B cell (primary cell): ENCODE measurements at regions of chr19 and their contacts with region 1.

Region 1: DNA sequence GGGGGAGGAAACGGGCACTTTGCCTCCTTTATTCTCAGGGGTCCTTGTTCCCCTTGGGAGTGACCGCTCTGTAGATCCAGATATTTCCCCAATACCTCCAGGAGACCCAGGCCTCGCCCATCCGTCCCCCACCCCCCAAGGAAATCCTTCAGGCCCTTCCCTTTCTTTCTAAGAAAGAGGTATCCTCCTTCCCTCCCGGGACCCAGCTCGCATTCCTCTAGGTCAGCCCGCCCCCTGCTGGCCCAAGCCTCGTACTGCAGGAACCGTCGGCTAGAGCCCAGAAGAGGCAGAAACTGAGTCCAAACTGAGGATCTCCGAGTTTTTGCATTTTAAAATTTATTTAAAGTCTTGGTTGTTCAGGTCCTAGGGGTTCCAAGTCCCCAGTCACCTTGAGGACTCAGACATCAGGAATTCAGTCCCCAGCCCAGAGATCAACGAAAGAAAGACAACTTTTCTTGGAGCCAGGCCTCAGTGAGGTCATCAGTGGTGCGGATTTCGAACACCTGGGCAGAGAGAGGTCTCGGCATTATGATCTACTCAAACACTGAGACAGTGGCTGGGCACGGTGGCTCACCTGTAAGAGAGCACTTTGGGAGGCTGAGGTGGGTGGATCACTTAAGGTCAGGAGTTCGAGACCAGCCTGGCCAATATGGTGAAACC is 7.5 kb upstream of the LRFN1 start:
- DNase-seq: peak; percentile 78
- ATAC-seq: peak; percentile 92
- H3K4me3 ChIP-seq: no peak overlapping the region
- H3K4me3 Mint-ChIP-seq: no peak overlapping the region
- H3K27ac ChIP-seq: no peak overlapping the region
- H3K27ac Mint-ChIP-seq: no peak overlapping the region
- H3K4me1 ChIP-seq: peaks cover 5 to 11% of the 10 kb centered on the region in 2 donors
- H3K4me1 Mint-ChIP-seq: peaks cover 30% of the 10 kb centered on the region
- H3K27me3 ChIP-seq: no peaks in the 10 kb centered on the region
- H3K27me3 Mint-ChIP-seq: no peaks in the 10 kb centered on the region
- CTCF ChIP-seq: peak; percentile 94

Region 2: GRCh38 chr19:39110263-39110967 is 217.8 kb before region 1 on chr19:
- CTCF ChIA-PET with region 1: interaction called, 39 read pairs
- POLR2A ChIA-PET with region 1: no interaction called
- intact Hi-C with region 1: loop called (anchors 1 kb)
- DNase-seq: peak; percentile 77
- ATAC-seq: peak; percentile 85
- H3K4me3 ChIP-seq: no peak overlapping the region
- H3K4me3 Mint-ChIP-seq: no peak overlapping the region
- H3K27ac ChIP-seq: no peak overlapping the region
- H3K27ac Mint-ChIP-seq: no peak overlapping the region
- H3K4me1 ChIP-seq: no peaks in the 10 kb centered on the region
- H3K4me1 Mint-ChIP-seq: no peaks in the 10 kb centered on the region
- H3K27me3 ChIP-seq: peaks cover 0 to 8% (median 3%) of the 10 kb centered on the region in 4 experiments
- H3K27me3 Mint-ChIP-seq: peaks cover 28% of the 10 kb centered on the region
- CTCF ChIP-seq: peak; percentile 89

Region 3: DNA sequence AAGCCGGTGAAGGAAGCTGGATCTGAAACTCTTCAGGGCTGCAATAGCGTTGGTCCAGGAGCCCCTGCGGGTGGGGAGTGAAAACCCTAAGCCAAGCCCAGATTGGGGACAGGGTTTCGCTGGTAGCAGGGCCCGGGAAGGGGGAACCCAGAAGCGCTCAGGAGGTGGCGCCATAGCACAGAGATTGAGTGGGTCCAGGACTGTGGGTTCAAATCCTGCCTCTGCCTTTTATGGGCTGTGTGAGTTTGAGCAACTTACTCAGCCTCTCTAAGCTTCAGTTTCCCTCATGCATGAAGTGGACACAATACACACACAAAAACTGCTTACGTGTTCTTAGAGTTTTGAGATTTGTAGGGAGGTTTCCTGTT is 115.8 kb before region 1 on chr19:
- CTCF ChIA-PET with region 1: interaction called, 3 read pairs
- POLR2A ChIA-PET with region 1: no interaction called
- intact Hi-C with region 1: loop called (anchors 5 kb)
- DNase-seq: peak; percentile 47
- ATAC-seq: no peak
- H3K4me3 ChIP-seq: no peak overlapping the region
- H3K4me3 Mint-ChIP-seq: no peak overlapping the region
- H3K27ac ChIP-seq: no peak overlapping the region
- H3K27ac Mint-ChIP-seq: no peak overlapping the region
- H3K4me1 ChIP-seq: no peaks in the 10 kb centered on the region
- H3K4me1 Mint-ChIP-seq: no peaks in the 10 kb centered on the region
- H3K27me3 ChIP-seq: peaks cover 0 to 5% (median 1%) of the 10 kb centered on the region in 4 experiments
- H3K27me3 Mint-ChIP-seq: peaks cover 15% of the 10 kb centered on the region
- CTCF ChIP-seq: peak; percentile 20

Region 4: DNA sequence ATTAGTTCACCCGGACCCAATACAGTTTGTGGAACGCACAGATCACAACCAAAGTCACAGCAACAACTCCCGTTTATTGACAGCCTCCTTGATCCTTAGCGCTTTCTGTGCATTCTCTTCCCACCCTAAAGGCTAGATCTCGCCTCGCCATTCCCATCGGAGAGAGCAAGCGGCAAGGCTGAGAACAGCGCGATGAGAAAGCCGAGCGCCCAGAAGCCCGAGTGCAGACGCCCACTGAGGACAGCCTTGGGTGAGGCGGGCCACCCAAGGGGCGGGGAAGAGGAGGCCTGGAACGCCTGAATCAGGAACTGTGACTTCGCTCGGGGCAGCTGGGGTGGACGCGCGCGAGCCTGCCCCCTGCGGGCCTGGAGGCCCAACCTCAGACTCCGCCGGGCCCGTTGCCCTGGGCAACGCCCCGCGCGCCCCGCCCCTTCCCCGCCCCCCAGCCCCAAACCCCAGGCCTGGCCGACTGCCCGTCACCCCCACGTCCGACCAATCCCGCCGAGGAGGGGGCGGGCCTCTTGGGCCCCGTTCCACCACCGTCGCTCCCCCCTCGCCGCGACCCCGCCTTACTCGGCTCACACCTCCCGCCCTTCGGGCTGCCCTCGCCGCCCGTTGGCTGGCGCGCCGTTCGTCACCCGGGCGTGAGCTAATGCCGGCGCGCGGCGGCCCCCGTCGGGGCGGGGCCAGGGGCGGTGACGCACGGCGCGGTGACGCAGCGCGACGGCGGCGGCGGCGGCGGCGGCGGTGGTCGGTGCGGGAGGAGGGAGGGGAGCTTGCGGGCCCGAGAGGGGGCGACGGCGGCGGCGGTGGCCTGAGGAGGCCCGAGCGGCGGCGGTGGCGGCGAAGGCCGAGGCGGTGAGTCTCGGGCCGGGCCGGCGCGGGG is 13.8 kb after region 1 on chr19 and contains the start of gene SAMD4B:
- CTCF ChIA-PET with region 1: interaction called, 12 read pairs
- POLR2A ChIA-PET with region 1: interaction called, 3 read pairs
- intact Hi-C with region 1: loop called (anchors 1 kb)
- DNase-seq: peak; percentile 99
- ATAC-seq: peak; percentile 92
- H3K4me3 ChIP-seq: peak within 1 kb of the TSS; percentile 88 to 98 (median 98)
- H3K4me3 Mint-ChIP-seq: peak within 1 kb of the TSS; percentile 97
- H3K27ac ChIP-seq: peak within 1 kb of the TSS; percentile 79 to 86
- H3K27ac Mint-ChIP-seq: peak within 1 kb of the TSS; percentile 95
- H3K4me1 ChIP-seq: peaks cover 32 to 46% of the 10 kb centered on the region in 2 donors
- H3K4me1 Mint-ChIP-seq: peaks cover 65% of the 10 kb centered on the region
- H3K27me3 ChIP-seq: no peaks in the 10 kb centered on the region
- H3K27me3 Mint-ChIP-seq: no peaks in the 10 kb centered on the region
- CTCF ChIP-seq: peak; percentile 81
- total RNA-seq, gene SAMD4B: 90.0 and 96.1 TPM in 2 replicates